ENCODE measurements at regions of chr9 and their contacts with region 1.

Region 1: GRCh38 chr9:129006328-129007034 is 21.6 kb downstream of the SH3GLB2 start:
- DNase-seq: no peak
- H3K4me3 ChIP-seq: no peak overlapping the region
- H3K27me3 ChIP-seq: no peaks in the 10 kb centered on the region
- CTCF ChIP-seq: peak; percentile 97

Region 2: DNA sequence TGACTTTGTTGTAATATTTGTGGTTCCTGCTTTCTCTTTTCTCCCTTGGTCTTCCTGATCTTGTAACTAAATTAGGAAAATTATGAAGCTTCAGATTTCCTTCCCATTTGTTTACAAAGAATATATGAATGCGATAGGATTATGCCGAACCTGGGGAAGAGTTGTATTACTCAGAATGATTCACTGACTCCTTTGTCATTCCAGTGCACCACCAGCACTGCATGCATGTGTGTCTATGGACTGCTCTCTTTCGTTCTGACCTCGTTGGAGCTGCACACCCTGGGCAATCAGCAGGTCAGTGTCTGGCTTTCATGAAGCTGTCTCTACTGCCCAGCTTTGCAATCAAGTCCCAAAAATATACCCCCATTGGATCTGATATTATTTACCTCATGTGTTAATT is 33.5 kb before region 1 on chr9:
- CTCF ChIA-PET with region 1: no interaction called
- POLR2A ChIA-PET with region 1: no interaction called
- DNase-seq: no peak
- H3K4me3 ChIP-seq: no peak overlapping the region
- H3K27me3 ChIP-seq: no peaks in the 10 kb centered on the region
- CTCF ChIP-seq: no peak

Region 3: DNA sequence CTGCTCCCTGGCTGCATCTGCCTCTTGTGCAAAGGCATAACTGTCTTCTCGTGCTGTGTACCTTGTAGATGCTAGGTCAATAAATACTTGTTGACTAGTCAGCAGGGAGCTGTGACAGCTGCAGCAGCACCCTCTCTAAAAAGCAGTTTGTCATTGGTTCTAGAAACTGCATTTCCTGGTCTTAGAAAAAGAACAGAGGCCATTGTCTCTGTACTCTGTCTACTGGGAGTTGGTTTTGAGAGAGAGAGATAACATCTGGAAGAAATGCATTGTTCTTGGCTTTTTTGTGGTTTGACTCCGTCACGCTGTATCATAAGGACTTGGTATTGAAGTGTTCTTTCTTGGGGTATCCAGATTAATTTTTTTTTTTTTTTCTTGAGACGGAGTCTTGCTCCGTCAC is 10.7 kb before region 1 on chr9:
- CTCF ChIA-PET with region 1: interaction called, 27 read pairs
- POLR2A ChIA-PET with region 1: no interaction called
- DNase-seq: no peak
- H3K4me3 ChIP-seq: no peak overlapping the region
- H3K27me3 ChIP-seq: no peaks in the 10 kb centered on the region
- CTCF ChIP-seq: no peak

Region 4: GRCh38 chr9:129023036-129023907 is 16.8 kb after region 1 on chr9:
- CTCF ChIA-PET with region 1: interaction called, 15 read pairs
- POLR2A ChIA-PET with region 1: no interaction called
- DNase-seq: peak; percentile 44
- H3K4me3 ChIP-seq: no peak overlapping the region
- H3K27me3 ChIP-seq: no peaks in the 10 kb centered on the region
- CTCF ChIP-seq: no peak

Region 5: GRCh38 chr9:129110740-129111527 is 104.5 kb after region 1 on chr9 and contains the starts of genes CRAT and PTPA:
- CTCF ChIA-PET with region 1: no interaction called
- POLR2A ChIA-PET with region 1: no interaction called
- DNase-seq: peak; percentile 50
- H3K4me3 ChIP-seq: peak within 1 kb of the TSS; percentile 98
- H3K27me3 ChIP-seq: no peaks in the 10 kb centered on the region
- CTCF ChIP-seq: no peak
- polyA plus RNA-seq, gene CRAT: 29.3 and 61.2 TPM in 2 replicates
- polyA plus RNA-seq, gene PTPA: 171 and 251 TPM in 2 replicates